Heart right ventricle (tissue), 16 donors: ENCODE measurements at regions of chr2 and their contacts with region 1.

Region 1: GRCh38 chr2:221429741-221430491 is 142.2 kb downstream of the EPHA4 start:
- DNase-seq: peak; percentile 23 to 31
- ATAC-seq: peak in 6 of 8 donors; percentile 29 to 87 (median 70)
- H3K4me3 ChIP-seq: no peak overlapping the region
- H3K27ac ChIP-seq: no peak overlapping the region
- H3K4me1 ChIP-seq: peaks cover 0 to 8% (median 0%) of the 10 kb centered on the region in 9 donors
- H3K27me3 ChIP-seq: no peaks in the 10 kb centered on the region
- CTCF ChIP-seq: no peak

Region 2: GRCh38 chr2:220695397-220696279 is 734.3 kb before region 1 on chr2:
- intact Hi-C with region 1: loop called in 1 of 10 experiments (anchors 10 kb)
- DNase-seq: no peak
- ATAC-seq: peak in 6 of 8 donors; percentile 20 to 88 (median 70)
- H3K4me3 ChIP-seq: no peak overlapping the region
- H3K27ac ChIP-seq: peak overlapping the region in 4 of 10 donors; percentile 21 to 48 (median 33)
- H3K4me1 ChIP-seq: peaks cover 0 to 9% (median 0%) of the 10 kb centered on the region in 9 donors
- H3K27me3 ChIP-seq: no peaks in the 10 kb centered on the region
- CTCF ChIP-seq: no peak

Region 3: DNA sequence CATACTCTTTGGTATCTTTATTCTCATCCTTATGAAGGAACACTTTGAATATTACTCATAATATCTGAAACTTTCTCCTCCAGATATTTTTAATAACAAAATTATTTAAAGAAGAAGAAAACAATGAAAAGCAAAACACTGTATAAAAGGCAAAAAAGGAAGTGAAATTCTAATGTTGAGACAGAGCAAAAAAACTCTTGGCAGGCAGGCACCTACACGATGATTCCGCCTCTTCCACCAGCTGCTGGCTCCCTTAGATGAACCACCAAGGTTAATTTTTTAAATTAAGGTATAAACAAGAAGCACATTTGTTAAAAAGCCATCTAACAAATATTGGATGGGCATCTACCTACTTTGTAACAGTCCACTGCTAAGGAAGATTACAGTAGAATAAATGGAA is 292.5 kb before region 1 on chr2:
- intact Hi-C with region 1: no loop called
- DNase-seq: no peak
- ATAC-seq: no peak
- H3K4me3 ChIP-seq: no peak overlapping the region
- H3K27ac ChIP-seq: no peak overlapping the region
- H3K4me1 ChIP-seq: peaks cover 0 to 3% (median 0%) of the 10 kb centered on the region in 9 donors
- H3K27me3 ChIP-seq: no peaks in the 10 kb centered on the region
- CTCF ChIP-seq: no peak

Region 4: GRCh38 chr2:221235941-221236340 is 194.0 kb before region 1 on chr2:
- intact Hi-C with region 1: loop called in 1 of 10 experiments (anchors 10 kb)
- DNase-seq: peak in 1 of 2 donors; percentile 19
- ATAC-seq: peak in 7 of 8 donors; percentile 44 to 97 (median 80)
- H3K4me3 ChIP-seq: no peak overlapping the region
- H3K27ac ChIP-seq: peak overlapping the region in 9 of 10 donors; percentile 3 to 71 (median 37)
- H3K4me1 ChIP-seq: peaks cover 0 to 42% (median 6%) of the 10 kb centered on the region in 9 donors
- H3K27me3 ChIP-seq: no peaks in the 10 kb centered on the region
- CTCF ChIP-seq: no peak